Endothelial cell of umbilical vein (primary cell): ENCODE measurements at regions of chr17 and their contacts with region 1.

Region 1: GRCh38 chr17:49434821-49435670 is 20.4 kb upstream of the PHB1 start:
- DNase-seq: peak; percentile 42
- H3K4me3 ChIP-seq: no peak overlapping the region
- H3K27ac ChIP-seq: no peak overlapping the region
- H3K4me1 ChIP-seq: no peaks in the 10 kb centered on the region
- H3K27me3 ChIP-seq: peaks cover 22 to 24% of the 10 kb centered on the region in 2 experiments
- CTCF ChIP-seq: peak; percentile 27 to 72
- POLR2A ChIP-seq: no peak

Region 2: GRCh38 chr17:49425004-49425286 is 10.1 kb before region 1 on chr17:
- CTCF ChIA-PET with region 1: no interaction called
- POLR2A ChIA-PET with region 1: no interaction called
- dilution Hi-C with region 1: no loop called
- intact Hi-C with region 1: no loop called
- DNase-seq: no peak
- H3K4me3 ChIP-seq: no peak overlapping the region
- H3K27ac ChIP-seq: no peak overlapping the region
- H3K4me1 ChIP-seq: no peaks in the 10 kb centered on the region
- H3K27me3 ChIP-seq: peaks cover 5 to 6% of the 10 kb centered on the region in 2 experiments
- CTCF ChIP-seq: no peak
- POLR2A ChIP-seq: no peak

Region 3: GRCh38 chr17:49445591-49445990 is 10.5 kb after region 1 on chr17:
- CTCF ChIA-PET with region 1: interaction called, 11 read pairs
- POLR2A ChIA-PET with region 1: no interaction called
- dilution Hi-C with region 1: no loop called
- intact Hi-C with region 1: no loop called
- DNase-seq: no peak
- H3K4me3 ChIP-seq: no peak overlapping the region
- H3K27ac ChIP-seq: no peak overlapping the region
- H3K4me1 ChIP-seq: no peaks in the 10 kb centered on the region
- H3K27me3 ChIP-seq: peaks cover 3 to 5% of the 10 kb centered on the region in 2 experiments
- CTCF ChIP-seq: no peak
- POLR2A ChIP-seq: no peak

Region 4: DNA sequence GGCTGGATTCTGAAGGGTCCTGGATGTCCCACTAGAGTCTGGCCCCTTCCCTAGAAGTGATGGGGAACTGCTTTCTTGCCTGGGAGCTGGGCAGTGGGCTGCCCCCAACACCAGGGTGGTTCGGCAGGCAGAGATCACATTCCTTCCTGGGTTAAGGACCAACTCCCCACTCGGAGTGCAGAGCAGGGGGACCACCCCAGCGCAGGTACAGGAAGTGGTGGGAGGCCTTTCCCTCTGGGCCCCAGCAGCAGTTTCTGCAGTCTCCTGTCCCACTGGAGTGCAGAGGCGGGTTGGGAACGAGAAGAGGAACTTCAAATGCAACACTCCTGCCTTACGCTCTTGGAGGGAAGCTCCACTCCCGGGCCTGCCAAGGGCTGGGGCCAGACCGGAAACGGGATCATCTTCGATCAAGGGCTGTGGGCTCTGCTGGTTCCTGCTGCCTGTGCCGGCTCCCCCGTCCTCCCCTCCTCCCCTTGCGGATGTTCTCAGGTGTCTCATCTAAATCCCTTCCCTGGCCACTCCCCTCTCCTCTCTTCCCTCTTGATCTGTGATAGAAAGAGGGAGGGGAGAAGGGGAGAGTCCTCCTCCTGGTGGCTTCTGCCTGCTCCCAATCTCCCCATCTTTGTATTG is 51.1 kb after region 1 on chr17:
- CTCF ChIA-PET with region 1: no interaction called
- POLR2A ChIA-PET with region 1: no interaction called
- dilution Hi-C with region 1: no loop called
- intact Hi-C with region 1: no loop called
- DNase-seq: no peak
- H3K4me3 ChIP-seq: no peak overlapping the region
- H3K27ac ChIP-seq: no peak overlapping the region
- H3K4me1 ChIP-seq: no peaks in the 10 kb centered on the region
- H3K27me3 ChIP-seq: peaks cover 45 to 48% of the 10 kb centered on the region in 2 experiments
- CTCF ChIP-seq: no peak
- POLR2A ChIP-seq: no peak

Region 5: DNA sequence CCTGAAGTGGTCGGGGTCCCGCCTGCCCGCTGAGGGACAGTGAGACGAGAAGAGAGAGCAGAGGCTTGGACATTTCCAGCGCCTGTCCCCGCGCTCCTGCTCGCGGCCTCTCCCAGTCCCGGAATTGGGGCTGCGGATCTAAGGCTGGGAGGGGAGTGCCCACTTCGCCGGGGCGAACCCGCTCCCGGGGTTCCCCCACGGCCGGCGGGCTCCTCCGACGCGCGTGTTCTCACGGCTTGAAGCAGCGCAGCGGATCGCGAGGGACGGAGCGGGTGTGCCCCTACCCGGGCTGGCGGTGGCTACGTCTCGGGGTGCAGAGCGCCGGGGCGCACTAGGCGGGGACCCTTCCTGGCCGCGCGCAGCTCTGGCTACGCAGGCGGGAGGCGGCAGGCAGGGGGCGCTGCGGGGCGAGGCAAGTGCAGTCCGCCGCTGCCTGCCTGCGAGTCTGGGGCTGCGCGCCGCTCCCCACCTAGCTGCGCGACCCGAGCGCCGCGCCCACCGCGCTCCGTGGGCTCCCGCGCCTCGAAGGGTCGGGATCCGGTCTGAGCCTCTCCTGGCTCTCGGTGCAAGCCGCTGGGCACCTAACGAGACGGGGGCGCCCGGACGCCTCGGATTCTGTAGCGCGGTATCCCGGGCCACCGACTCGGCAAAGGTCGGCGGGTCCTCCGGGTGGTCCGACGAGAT is 61.3 kb after region 1 on chr17:
- CTCF ChIA-PET with region 1: interaction called, 10 read pairs
- POLR2A ChIA-PET with region 1: no interaction called
- dilution Hi-C with region 1: no loop called
- intact Hi-C with region 1: no loop called
- DNase-seq: peak; percentile 25
- H3K4me3 ChIP-seq: no peak overlapping the region
- H3K27ac ChIP-seq: no peak overlapping the region
- H3K4me1 ChIP-seq: peaks cover 10% of the 10 kb centered on the region
- H3K27me3 ChIP-seq: peaks cover 67 to 70% of the 10 kb centered on the region in 2 experiments
- CTCF ChIP-seq: peak; percentile 79
- POLR2A ChIP-seq: no peak

Region 6: GRCh38 chr17:49515196-49515770 is 80.2 kb after region 1 on chr17:
- CTCF ChIA-PET with region 1: no interaction called
- POLR2A ChIA-PET with region 1: no interaction called
- dilution Hi-C with region 1: no loop called
- intact Hi-C with region 1: no loop called
- DNase-seq: no peak
- H3K4me3 ChIP-seq: no peak overlapping the region
- H3K27ac ChIP-seq: no peak overlapping the region
- H3K4me1 ChIP-seq: no peaks in the 10 kb centered on the region
- H3K27me3 ChIP-seq: peaks cover 0 to 3% of the 10 kb centered on the region in 2 experiments
- CTCF ChIP-seq: no peak
- POLR2A ChIP-seq: no peak

Region 7: DNA sequence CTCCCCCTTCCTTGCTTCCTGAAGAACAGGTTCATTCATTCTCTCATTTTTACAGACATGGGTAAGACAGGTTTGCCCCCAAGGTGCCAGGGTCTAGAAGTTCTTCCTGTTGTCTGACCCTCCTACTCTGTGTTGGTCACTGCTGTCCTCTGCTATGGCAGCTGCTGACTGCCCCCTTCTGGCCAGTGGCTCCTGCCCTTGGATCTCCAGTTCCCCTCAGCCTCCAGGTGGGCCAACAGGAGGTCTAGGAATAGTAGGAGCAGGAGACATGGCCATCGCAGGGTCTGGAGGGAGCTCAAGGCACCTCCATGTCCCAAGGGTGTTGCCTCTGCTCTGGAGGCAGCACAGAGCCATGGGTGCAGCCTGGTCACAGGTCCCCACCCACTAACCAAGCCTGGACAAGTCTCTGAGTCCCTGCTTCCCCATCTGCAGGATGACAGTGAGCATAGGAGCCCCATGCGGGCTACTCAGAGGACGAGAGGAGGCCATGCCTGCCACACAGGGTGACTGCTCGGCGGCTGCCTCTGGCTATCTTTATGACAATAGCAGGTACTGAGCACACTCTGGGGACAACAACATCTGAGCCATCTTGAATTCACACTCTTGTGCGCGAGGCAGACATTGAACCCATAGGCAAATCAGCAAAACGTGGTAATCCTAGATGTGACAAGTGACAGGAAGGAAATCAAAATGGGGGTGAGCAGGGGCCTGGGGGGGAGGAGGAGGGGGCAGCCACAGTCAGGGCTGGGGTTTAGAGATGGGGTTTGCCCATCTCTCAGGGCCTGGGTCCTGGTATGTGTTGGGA is 113.7 kb after region 1 on chr17:
- CTCF ChIA-PET with region 1: interaction called, 5 read pairs
- POLR2A ChIA-PET with region 1: no interaction called
- dilution Hi-C with region 1: no loop called
- intact Hi-C with region 1: loop called (anchors 1 kb)
- DNase-seq: no peak
- H3K4me3 ChIP-seq: no peak overlapping the region
- H3K27ac ChIP-seq: no peak overlapping the region
- H3K4me1 ChIP-seq: no peaks in the 10 kb centered on the region
- H3K27me3 ChIP-seq: no peaks in the 10 kb centered on the region
- CTCF ChIP-seq: peak; percentile 25 to 59
- POLR2A ChIP-seq: no peak